ENCODE measurements at regions of chr2 and their contacts with region 1.

Region 1: GRCh38 chr2:99205491-99205890 is 24.5 kb downstream of the MRPL30 start:
- DNase-seq: no peak
- ATAC-seq: no peak
- H3K4me3 Mint-ChIP-seq: no peak overlapping the region
- H3K27ac Mint-ChIP-seq: no peak overlapping the region
- H3K4me1 Mint-ChIP-seq: peaks cover 6% of the 10 kb centered on the region
- H3K27me3 Mint-ChIP-seq: no peaks in the 10 kb centered on the region

Region 2: DNA sequence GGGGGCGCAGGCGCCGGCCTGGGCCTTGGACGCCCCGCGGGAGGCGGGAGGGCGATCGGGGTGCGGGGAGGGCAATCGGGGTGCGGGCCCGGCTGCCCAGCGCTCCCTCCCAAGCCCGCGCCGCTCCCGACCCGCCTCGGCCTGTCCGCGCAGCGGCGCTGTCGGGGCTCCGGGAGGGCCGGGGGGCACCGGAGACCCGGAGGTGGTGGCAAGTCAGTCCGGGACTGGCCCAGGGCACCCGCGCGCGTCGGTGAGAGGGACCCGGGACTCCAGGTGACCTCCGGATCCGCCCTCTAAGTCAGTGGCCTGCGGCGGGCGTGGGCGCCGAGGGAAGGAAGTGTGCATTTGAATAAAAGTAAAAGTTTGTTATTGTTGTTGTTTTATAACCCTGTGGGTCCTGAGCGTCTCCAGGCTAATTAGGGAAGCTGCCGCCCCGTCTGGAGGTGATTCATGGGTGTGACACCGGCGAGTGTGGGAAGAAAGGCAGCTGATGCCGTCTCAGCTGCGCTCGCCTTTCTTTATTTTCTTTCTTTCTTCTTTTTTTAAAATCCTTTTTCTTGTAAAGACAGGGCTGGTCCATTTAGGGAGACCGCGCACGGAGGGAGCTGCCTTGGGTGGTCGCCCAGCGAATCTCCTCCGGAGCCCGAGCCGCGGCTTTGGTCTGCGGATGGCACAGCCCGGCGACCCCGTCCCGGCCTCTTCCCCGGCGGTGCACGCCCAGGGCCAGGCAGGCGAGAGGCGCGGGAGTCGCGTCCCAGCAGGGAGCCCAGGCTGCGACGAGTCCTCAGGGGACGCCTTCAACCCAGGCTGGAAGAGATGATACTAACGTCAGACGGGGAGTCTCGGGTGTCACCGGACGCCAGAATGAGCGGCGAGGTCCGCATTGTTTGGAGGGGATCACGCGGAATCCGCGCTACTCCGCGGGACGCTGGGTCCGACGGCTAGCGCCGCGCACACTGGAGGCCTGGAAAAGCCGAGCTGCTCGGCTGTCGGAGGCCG is 268.8 kb before region 1 on chr2:
- POLR2A ChIA-PET with region 1: no interaction called
- DNase-seq: peak; percentile 49
- ATAC-seq: peak; percentile 30
- H3K4me3 Mint-ChIP-seq: peak overlapping the region; percentile 66
- H3K27ac Mint-ChIP-seq: no peak overlapping the region
- H3K4me1 Mint-ChIP-seq: peaks cover 3% of the 10 kb centered on the region
- H3K27me3 Mint-ChIP-seq: peaks cover 66% of the 10 kb centered on the region

Region 3: GRCh38 chr2:99190548-99190947 is 14.9 kb before region 1 on chr2:
- POLR2A ChIA-PET with region 1: no interaction called
- DNase-seq: no peak
- ATAC-seq: no peak
- H3K4me3 Mint-ChIP-seq: no peak overlapping the region
- H3K27ac Mint-ChIP-seq: no peak overlapping the region
- H3K4me1 Mint-ChIP-seq: peaks cover 11% of the 10 kb centered on the region
- H3K27me3 Mint-ChIP-seq: no peaks in the 10 kb centered on the region

Region 4: GRCh38 chr2:99217929-99218501 is 12.5 kb after region 1 on chr2:
- POLR2A ChIA-PET with region 1: interaction called, 11 read pairs
- DNase-seq: no peak
- ATAC-seq: peak; percentile 60
- H3K4me3 Mint-ChIP-seq: no peak overlapping the region
- H3K27ac Mint-ChIP-seq: no peak overlapping the region
- H3K4me1 Mint-ChIP-seq: peaks cover 7% of the 10 kb centered on the region
- H3K27me3 Mint-ChIP-seq: no peaks in the 10 kb centered on the region

Region 5: DNA sequence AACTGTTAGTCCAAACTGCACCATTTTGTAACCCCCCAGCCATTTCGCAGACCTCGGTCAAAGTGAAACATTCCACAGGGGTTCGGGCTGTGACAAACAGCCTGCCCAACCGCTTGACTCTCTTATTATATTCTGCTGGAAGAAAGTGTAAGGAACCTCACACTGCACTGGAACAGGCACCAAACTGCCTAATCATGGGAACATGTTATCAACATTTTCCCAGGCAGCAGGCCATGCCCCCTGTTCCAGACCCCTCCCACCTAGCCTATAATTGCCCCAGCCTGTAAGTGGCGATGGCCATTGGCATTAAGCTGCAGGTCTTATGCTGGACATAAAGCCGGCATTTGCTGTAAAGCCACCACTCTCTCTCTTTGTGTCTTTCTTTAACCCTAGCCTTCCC is 33.1 kb after region 1 on chr2:
- POLR2A ChIA-PET with region 1: no interaction called
- DNase-seq: no peak
- ATAC-seq: no peak
- H3K4me3 Mint-ChIP-seq: no peak overlapping the region
- H3K27ac Mint-ChIP-seq: no peak overlapping the region
- H3K4me1 Mint-ChIP-seq: no peaks in the 10 kb centered on the region
- H3K27me3 Mint-ChIP-seq: no peaks in the 10 kb centered on the region

Measured in activated naive CD8-positive, alpha-beta T cell treated with anti-CD3 and anti-CD28 coated beads, Interleukin-2, amount 10 ng/mL, durations not matched to agents 7 days and 5 days (primary cell).